ENCODE measurements at regions of chr9 and their contacts with region 1.

Region 1: GRCh38 chr9:128512820-128513219 is 8.3 kb downstream of the GLE1 start:
- DNase-seq: no peak
- ATAC-seq: no peak
- H3K4me3 ChIP-seq: no peak overlapping the region
- H3K4me3 Mint-ChIP-seq: no peak overlapping the region
- H3K27ac ChIP-seq: peak overlapping the region; percentile 11
- H3K27ac Mint-ChIP-seq: peak overlapping the region; percentile 70 to 76
- H3K4me1 ChIP-seq: peaks cover 25% of the 10 kb centered on the region
- H3K4me1 Mint-ChIP-seq: peaks cover 22 to 30% of the 10 kb centered on the region in 2 donors
- H3K27me3 ChIP-seq: no peaks in the 10 kb centered on the region
- H3K27me3 Mint-ChIP-seq: no peaks in the 10 kb centered on the region
- CTCF ChIP-seq: no peak

Region 2: DNA sequence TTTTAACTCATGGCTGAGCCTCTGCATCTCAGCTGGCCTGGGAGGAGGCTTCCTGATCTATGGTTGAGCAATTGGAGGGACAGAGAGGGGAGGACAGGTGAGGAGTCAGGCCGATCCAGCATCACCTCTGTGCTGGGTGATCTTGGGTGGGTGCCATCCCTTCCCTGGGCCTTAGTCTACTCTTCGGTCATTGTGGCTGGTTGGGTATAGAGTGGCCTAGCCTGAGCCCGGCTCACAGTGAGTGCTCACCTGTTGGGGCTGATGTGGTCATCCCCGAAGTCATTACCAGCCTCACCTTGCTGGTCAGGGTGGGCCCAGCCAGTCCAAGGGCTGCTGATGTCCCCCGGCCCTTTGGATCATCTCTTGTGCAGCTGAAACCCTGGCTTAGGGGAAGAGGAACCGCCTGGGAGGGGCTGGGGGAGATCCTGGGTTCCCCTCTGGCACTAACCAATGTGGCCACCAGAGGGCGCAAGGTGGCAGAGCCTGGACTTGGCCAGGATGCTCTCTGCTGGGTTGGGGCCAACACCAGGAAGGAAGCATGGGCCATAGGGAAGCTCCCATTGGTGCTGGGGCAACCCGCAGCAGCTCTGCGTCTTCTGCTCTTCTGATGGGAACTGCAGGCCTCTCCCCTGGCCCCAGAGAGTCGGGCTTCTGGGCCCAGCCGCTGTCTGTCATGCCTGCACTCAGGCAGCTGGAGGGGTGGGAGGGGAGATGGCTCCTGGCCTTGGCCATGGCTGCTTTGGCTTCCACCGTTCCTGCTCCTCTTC is 74.3 kb before region 1 on chr9:
- intact Hi-C with region 1: loop called (anchors 2 kb)
- DNase-seq: peak; percentile 80 to 88
- ATAC-seq: peak; percentile 86 to 97 (median 96)
- H3K4me3 ChIP-seq: no peak overlapping the region
- H3K4me3 Mint-ChIP-seq: no peak overlapping the region
- H3K27ac ChIP-seq: peak overlapping the region; percentile 6
- H3K27ac Mint-ChIP-seq: peak overlapping the region in 1 of 2 donors; percentile 54
- H3K4me1 ChIP-seq: peaks cover 12% of the 10 kb centered on the region
- H3K4me1 Mint-ChIP-seq: peaks cover 5 to 11% of the 10 kb centered on the region in 2 donors
- H3K27me3 ChIP-seq: no peaks in the 10 kb centered on the region
- H3K27me3 Mint-ChIP-seq: no peaks in the 10 kb centered on the region
- CTCF ChIP-seq: peak; percentile 94

Measured in natural killer cell (primary cell).